ENCODE measurements at regions of chr5 and their contacts with region 1.

Region 1: GRCh38 chr5:84382363-84383295 is 2.1 kb downstream of the EDIL3 start:
- DNase-seq: peak; percentile 56 to 76 (median 64)
- H3K4me3 ChIP-seq: peak overlapping the region; percentile 57 to 91 (median 78)
- H3K27ac ChIP-seq: peak overlapping the region; percentile 71 to 96 (median 93)
- H3K27me3 ChIP-seq: peaks cover 0 to 15% (median 0%) of the 10 kb centered on the region in 45 donors
- CTCF ChIP-seq: peak in 4 of 56 donors; percentile 10 to 21 (median 12)

Region 2: GRCh38 chr5:83721953-83722901 is 660.4 kb before region 1 on chr5:
- intact Hi-C with region 1: loop called (anchors 2 to 10 kb)
- DNase-seq: peak; percentile 74 to 87 (median 81)
- H3K4me3 ChIP-seq: peak overlapping the region; percentile 47 to 81 (median 70)
- H3K27ac ChIP-seq: peak overlapping the region in 49 of 59 donors; percentile 1 to 87 (median 66)
- H3K27me3 ChIP-seq: no peaks in the 10 kb centered on the region
- CTCF ChIP-seq: peak; percentile 11 to 83 (median 63)

Region 3: DNA sequence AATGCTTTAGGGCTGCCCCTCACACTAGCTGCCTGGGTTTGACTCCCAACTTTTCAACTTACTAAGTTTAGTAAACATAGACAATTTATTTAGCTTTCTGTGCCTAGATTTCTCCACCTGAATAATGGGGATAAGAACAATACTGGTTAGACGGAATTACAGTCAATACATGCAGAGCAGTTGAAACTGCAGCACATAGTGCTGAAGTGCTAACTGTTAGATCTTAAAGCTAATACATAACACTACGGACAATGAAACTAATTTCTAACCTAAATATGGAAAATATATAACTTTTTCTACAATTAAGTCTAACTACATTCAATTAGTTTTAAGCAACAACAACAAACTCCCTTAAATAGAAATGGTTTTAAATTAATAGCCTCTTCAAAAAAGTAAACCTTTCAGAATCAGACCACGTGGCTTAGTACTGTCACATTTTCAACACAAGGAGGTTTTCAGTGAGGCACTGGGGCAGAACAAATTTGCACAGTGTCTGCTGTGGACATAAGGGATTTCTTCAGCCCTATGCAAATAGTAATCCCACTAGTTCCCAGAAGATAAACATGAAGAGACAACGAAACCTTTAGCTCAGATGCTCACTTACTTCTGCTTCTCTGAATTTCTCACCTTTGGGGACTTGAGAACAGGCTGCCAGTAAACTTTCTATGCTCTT is 291.4 kb before region 1 on chr5:
- intact Hi-C with region 1: loop called in 1 of 2 experiments (anchors 10 kb)
- DNase-seq: no peak
- H3K4me3 ChIP-seq: peak overlapping the region in 1 of 59 donors; percentile 15
- H3K27ac ChIP-seq: peak overlapping the region in 30 of 59 donors; percentile 3 to 74 (median 36)
- H3K27me3 ChIP-seq: no peaks in the 10 kb centered on the region
- CTCF ChIP-seq: peak in 1 of 56 donors; percentile 6

Region 4: DNA sequence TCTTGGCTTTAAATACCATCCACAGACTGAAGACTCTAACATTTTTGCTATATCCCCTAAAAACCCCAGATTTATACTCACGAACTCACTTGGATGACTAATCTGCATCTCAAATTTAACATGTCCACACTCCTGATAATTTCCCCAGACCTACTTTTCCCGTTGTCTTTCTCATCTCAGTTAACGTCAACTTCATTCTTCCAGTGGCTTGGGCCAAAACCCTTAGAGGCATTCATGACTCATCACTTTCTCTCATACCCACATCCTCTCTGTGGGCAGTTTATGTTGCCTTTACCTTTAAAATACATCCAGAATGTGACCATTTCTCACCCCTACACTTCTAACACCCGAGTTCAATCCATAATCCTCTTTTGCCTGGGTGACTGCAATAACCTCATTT is 94.7 kb before region 1 on chr5:
- intact Hi-C with region 1: loop called (anchors 5 kb)
- DNase-seq: no peak
- H3K4me3 ChIP-seq: no peak overlapping the region
- H3K27ac ChIP-seq: peak overlapping the region in 53 of 59 donors; percentile 3 to 98 (median 93)
- H3K27me3 ChIP-seq: no peaks in the 10 kb centered on the region
- CTCF ChIP-seq: no peak

Region 5: DNA sequence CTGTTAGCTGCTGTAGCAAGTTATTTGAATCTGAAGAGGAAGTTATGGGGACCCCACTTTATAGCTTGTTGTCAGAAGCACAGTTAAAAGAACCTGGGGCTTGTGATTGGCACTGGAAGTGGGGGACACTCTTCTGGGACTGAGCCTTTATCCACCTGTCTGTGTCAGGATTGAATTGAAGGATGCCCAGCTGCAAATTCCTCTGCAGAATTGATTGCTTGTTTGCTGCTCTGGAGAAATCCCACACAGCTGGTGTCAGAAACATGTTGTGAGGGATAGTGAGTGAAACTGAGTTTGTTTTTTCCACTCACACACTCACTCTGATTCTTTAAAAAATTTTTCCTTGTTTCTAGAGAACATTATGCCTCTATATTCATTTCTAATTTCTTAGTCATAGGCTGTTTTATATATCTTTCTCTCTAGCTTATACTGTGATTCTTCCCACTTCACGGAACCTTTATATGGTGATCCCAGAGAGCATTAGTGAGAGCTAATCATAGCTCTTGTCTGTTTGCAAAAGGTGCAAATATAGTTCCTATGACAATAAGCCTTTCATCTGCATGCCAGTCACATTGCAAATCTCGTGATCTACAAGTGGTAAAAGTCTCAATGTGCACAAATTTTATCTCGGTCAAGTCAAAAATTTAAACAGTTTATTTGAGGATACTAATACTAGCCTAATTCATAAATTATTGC is 190.5 kb after region 1 on chr5:
- intact Hi-C with region 1: loop called (anchors 5 kb)
- DNase-seq: no peak
- H3K4me3 ChIP-seq: peak overlapping the region in 23 of 59 donors; percentile 0 to 40 (median 14)
- H3K27ac ChIP-seq: peak overlapping the region; percentile 19 to 100 (median 91)
- H3K27me3 ChIP-seq: no peaks in the 10 kb centered on the region
- CTCF ChIP-seq: no peak

Region 6: DNA sequence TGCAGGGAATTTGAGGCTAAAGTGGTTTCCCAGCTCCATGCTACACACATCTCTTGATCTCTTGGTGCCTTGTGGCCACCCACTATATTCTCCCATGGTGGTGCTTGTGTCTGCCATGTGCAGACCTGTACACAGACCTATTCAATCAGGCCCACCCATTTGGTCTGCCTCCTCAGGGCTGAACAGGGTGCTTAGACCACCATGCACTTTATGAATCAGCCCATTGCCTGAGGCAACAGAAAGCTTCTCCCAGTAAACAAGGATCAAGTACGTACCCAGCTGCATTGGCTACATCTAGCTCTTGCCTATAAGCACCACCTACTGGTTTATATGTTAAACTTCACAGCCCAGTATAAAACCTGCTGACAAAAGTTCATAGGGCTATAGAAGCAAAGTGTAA is 666.4 kb after region 1 on chr5:
- intact Hi-C with region 1: loop called in 1 of 2 experiments (anchors 10 kb)
- DNase-seq: peak in 1 of 10 donors; percentile 33
- H3K4me3 ChIP-seq: no peak overlapping the region
- H3K27ac ChIP-seq: no peak overlapping the region
- H3K27me3 ChIP-seq: peaks cover 0 to 3% (median 0%) of the 10 kb centered on the region in 45 donors
- CTCF ChIP-seq: peak in 51 of 56 donors; percentile 12 to 67 (median 41)

Measured in dorsolateral prefrontal cortex (tissue), 120 donors.